CD8-positive, alpha-beta T cell (primary cell): ENCODE measurements at regions of chr13 and their contacts with region 1.

Region 1: DNA sequence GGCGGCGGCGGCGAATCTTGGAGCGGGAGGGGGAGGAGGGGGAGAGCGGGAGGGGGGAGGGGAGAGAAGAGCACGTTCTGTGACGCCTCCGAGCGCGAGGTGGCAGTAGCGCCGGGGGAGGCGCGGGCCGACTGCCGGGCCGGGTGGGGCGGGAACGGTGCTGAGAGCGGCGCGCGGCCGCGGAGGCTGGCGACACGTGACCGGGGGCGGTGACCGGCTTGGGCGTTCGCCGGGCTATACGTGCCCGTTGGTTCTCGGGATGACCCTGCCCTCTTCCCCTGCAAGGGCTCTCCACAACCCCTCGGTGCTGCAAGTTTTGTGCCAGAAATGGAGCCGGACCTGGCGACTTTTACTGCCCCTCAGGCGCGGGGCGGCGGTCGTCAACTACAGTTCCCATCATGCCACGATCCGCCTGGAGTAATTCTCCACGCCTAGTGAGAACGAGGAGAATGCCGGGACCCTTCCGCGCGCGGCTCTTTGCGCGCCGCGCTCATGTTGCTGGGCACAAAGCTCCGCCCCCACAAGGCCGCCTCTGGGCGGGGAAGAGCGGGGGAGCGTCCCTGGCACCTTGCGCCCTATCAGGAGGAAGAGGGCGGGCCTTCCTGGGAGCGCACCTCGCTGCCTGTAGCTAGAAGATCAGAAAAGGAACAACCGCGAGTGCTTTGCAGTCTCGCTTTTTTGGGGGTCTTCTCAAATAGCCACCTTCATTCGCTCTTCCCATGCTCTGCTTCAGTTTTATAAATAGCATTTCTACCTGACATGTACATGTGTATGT is at the start of gene KPNA3:
- DNase-seq: peak; percentile 92 to 98 (median 96)
- ATAC-seq: peak; percentile 91
- H3K4me3 ChIP-seq: peak within 1 kb of the TSS; percentile 83 to 99
- H3K4me3 Mint-ChIP-seq: peak within 1 kb of the TSS; percentile 95
- H3K27ac ChIP-seq: peak within 1 kb of the TSS; percentile 79 to 89
- H3K27ac Mint-ChIP-seq: peak within 1 kb of the TSS; percentile 96
- H3K4me1 ChIP-seq: peaks cover 21% of the 10 kb centered on the region
- H3K4me1 Mint-ChIP-seq: peaks cover 34% of the 10 kb centered on the region
- H3K27me3 ChIP-seq: peaks cover 0 to 7% of the 10 kb centered on the region in 2 experiments
- H3K27me3 Mint-ChIP-seq: peaks cover 9% of the 10 kb centered on the region
- CTCF ChIP-seq: no peak
- total RNA-seq, gene KPNA3: 22.3 to 23.5 TPM

Region 2: DNA sequence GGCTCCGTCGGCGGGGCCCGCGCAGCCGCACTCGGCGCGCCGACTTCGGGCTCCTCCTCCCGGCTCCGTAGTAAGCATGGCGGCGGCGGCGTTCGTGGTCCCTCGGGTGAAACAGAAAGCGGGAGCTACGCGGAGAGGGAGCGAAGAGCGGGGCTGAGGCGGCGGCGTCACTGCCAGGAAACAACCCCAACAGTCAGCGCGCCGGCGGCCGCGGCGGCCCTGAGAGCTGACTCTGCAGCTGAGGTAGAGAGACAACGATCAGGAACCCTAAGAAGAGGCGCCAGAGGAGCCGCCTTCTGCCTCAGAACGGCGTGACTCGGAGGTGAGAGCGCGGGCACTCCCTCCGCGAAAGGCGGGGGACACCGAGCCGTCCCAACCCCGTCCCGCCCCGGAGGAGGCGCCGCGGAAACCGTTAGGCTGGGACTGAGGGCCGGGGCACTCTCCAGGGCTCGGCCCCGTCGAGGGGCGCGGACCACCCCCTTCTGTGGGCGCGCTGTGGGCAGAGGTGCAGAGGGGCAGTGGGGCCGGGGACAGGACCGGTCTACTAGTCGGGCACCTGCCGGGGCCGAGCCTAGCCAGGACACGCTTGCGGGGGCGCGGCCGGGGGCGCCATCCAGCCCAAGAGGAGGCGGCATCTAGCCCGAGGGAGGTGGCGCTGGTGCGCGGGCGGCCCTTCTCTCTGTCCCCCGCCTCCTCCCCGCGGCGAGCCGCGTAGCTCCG is 816.7 kb before region 1 on chr13 and contains the start of gene FNDC3A:
- CTCF ChIA-PET with region 1: no interaction called
- POLR2A ChIA-PET with region 1: interaction called, 5 read pairs
- intact Hi-C with region 1: loop called (anchors 5 to 10 kb)
- DNase-seq: peak; percentile 70 to 93 (median 83)
- ATAC-seq: peak; percentile 70
- H3K4me3 ChIP-seq: peak within 1 kb of the TSS; percentile 79 to 80
- H3K4me3 Mint-ChIP-seq: peak within 1 kb of the TSS; percentile 97
- H3K27ac ChIP-seq: peak within 1 kb of the TSS; percentile 79 to 91
- H3K27ac Mint-ChIP-seq: peak within 1 kb of the TSS; percentile 99
- H3K4me1 ChIP-seq: peaks cover 33% of the 10 kb centered on the region
- H3K4me1 Mint-ChIP-seq: peaks cover 42% of the 10 kb centered on the region
- H3K27me3 ChIP-seq: no peaks in the 10 kb centered on the region
- H3K27me3 Mint-ChIP-seq: no peaks in the 10 kb centered on the region
- CTCF ChIP-seq: no peak
- total RNA-seq, gene FNDC3A: 27.0 to 27.7 TPM

Region 3: DNA sequence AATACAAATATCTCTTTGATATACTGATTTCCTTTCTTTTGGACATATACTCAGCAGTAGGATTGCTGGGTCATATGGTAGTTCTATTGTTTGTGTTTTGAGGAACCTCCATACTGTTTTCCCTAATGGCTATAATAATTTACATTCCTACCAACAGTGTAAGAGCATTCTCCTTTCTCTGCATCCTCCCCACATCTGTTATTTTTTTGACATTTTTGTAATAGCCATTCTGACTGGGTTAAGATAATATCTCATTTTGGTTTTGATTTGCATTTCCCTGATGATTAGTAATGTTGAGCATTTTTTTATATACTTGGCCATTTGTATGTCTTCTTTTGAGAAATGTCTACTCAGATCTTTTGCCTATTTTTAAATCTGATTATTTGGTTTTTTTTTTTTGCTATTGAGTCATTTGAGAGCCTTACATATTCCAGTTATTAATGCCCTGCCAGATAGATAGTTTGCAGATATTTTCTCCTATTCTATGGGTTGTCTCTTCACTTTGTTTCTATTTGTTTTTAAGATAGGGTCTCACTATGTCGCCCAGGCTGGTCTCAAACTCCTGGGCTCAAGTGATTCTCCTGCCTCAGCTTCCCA is 721.3 kb before region 1 on chr13:
- CTCF ChIA-PET with region 1: no interaction called
- POLR2A ChIA-PET with region 1: no interaction called
- intact Hi-C with region 1: no loop called
- DNase-seq: no peak
- ATAC-seq: no peak
- H3K4me3 ChIP-seq: no peak overlapping the region
- H3K4me3 Mint-ChIP-seq: no peak overlapping the region
- H3K27ac ChIP-seq: no peak overlapping the region
- H3K27ac Mint-ChIP-seq: no peak overlapping the region
- H3K4me1 ChIP-seq: no peaks in the 10 kb centered on the region
- H3K4me1 Mint-ChIP-seq: peaks cover 7% of the 10 kb centered on the region
- H3K27me3 ChIP-seq: no peaks in the 10 kb centered on the region
- H3K27me3 Mint-ChIP-seq: no peaks in the 10 kb centered on the region
- CTCF ChIP-seq: no peak

Region 4: DNA sequence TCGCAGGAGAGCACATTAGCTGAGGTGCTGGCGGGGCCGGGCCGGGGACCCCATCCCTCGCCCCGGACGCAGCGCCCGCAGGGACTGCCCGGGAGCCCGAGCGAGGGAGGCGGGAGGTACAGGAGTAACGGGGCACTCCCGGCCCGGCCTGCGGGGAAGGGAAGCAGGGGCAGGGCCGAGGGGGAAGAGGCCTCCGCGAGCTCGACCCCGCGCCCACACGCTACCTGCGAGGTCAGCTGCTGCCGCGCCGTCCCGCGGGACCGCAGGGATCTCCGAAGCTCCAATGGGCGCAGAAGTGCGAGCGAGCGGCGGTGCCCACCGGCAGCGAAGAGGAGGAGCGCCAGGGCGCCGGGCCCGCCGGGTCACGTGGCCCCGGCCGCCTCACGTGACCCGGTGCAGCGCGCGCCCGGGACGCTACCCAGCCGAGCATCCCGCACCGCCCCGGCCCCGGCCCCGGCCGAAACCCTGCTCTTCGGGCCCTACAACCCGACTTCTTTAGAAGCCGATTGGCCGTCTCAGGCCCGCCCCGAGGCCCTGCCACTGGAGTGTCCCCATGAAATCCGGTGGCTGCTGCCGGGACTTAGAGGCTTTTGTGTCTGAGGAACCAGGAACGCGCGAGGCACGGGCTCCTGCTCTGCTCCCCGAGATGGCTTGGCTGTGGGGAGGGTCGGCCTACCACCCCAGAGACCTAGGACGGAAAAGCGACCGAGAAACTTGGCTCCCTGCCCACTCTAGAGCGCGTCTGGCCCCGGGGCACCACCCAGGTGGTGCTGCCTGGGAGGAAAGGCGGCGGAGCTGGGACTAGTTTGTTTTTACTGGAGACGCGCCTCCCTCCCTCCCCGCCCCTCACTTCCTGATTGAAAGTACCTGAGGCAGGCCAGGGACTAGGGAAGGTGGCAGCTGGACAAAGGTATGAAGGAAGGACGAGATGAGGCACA is 207.2 kb before region 1 on chr13 and contains the start of gene RCBTB1:
- CTCF ChIA-PET with region 1: no interaction called
- POLR2A ChIA-PET with region 1: no interaction called
- intact Hi-C with region 1: loop called (anchors 1 kb)
- DNase-seq: peak; percentile 33 to 88 (median 68)
- ATAC-seq: peak; percentile 88
- H3K4me3 ChIP-seq: peak within 1 kb of the TSS; percentile 89 to 97
- H3K4me3 Mint-ChIP-seq: peak within 1 kb of the TSS; percentile 90
- H3K27ac ChIP-seq: peak within 1 kb of the TSS; percentile 71 to 86
- H3K27ac Mint-ChIP-seq: peak within 1 kb of the TSS; percentile 92
- H3K4me1 ChIP-seq: peaks cover 9% of the 10 kb centered on the region
- H3K4me1 Mint-ChIP-seq: peaks cover 36% of the 10 kb centered on the region
- H3K27me3 ChIP-seq: no peaks in the 10 kb centered on the region
- H3K27me3 Mint-ChIP-seq: no peaks in the 10 kb centered on the region
- CTCF ChIP-seq: no peak
- total RNA-seq, gene RCBTB1: 12.1 to 14.2 TPM

Region 5: DNA sequence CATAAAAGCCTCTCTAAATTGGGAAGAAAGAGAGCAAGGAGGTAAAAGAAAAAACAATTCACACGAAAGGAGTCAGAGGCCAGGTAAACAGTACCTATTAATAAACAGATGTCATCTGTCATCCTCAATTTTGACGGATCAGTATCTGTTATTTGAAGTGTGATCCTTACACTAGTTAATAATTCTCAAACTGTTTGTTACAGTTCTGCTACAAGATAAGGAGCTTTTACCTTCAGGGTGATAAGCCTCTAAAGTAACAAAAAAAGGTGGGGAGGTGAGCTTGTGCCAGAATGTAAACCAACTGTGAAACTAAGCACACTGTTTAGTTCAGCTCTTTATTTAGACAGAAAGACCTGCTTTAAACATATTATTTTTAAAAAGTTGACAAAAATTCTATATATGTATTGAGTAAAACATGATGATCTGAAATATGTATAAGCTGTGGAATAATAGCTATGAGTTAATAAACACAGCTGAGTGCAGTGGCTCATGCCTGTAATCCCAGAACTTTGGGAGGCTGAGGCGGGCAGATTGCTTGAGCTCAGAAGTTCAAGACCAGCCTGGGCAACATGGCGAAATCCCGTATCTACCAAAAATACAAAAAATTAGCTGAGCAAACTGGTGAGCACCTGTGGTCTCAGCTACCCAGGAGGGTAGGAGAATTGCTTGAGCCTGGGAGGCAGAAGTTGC is 53.1 kb before region 1 on chr13:
- CTCF ChIA-PET with region 1: interaction called, 3 read pairs
- POLR2A ChIA-PET with region 1: no interaction called
- intact Hi-C with region 1: loop called in 1 of 2 experiments (anchors 5 kb)
- DNase-seq: no peak
- ATAC-seq: no peak
- H3K4me3 ChIP-seq: no peak overlapping the region
- H3K4me3 Mint-ChIP-seq: no peak overlapping the region
- H3K27ac ChIP-seq: no peak overlapping the region
- H3K27ac Mint-ChIP-seq: no peak overlapping the region
- H3K4me1 ChIP-seq: no peaks in the 10 kb centered on the region
- H3K4me1 Mint-ChIP-seq: no peaks in the 10 kb centered on the region
- H3K27me3 ChIP-seq: no peaks in the 10 kb centered on the region
- H3K27me3 Mint-ChIP-seq: no peaks in the 10 kb centered on the region
- CTCF ChIP-seq: no peak

Region 6: GRCh38 chr13:50123862-50124536 is 331.3 kb after region 1 on chr13:
- CTCF ChIA-PET with region 1: no interaction called
- POLR2A ChIA-PET with region 1: interaction called, 10 read pairs
- intact Hi-C with region 1: loop called in 1 of 2 experiments (anchors 5 kb)
- DNase-seq: peak in 8 of 9 experiments; percentile 43 to 91 (median 72)
- ATAC-seq: peak; percentile 65
- H3K4me3 ChIP-seq: peak overlapping the region; percentile 87 to 93
- H3K4me3 Mint-ChIP-seq: peak overlapping the region; percentile 90
- H3K27ac ChIP-seq: peak overlapping the region; percentile 90 to 92
- H3K27ac Mint-ChIP-seq: peak overlapping the region; percentile 96
- H3K4me1 ChIP-seq: peaks cover 24% of the 10 kb centered on the region
- H3K4me1 Mint-ChIP-seq: peaks cover 44% of the 10 kb centered on the region
- H3K27me3 ChIP-seq: peaks cover 12 to 19% of the 10 kb centered on the region in 2 experiments
- H3K27me3 Mint-ChIP-seq: peaks cover 15% of the 10 kb centered on the region
- CTCF ChIP-seq: no peak